Transverse colon (tissue), 4 donors: ENCODE measurements at regions of chr4 and their contacts with region 1.

Region 1: DNA sequence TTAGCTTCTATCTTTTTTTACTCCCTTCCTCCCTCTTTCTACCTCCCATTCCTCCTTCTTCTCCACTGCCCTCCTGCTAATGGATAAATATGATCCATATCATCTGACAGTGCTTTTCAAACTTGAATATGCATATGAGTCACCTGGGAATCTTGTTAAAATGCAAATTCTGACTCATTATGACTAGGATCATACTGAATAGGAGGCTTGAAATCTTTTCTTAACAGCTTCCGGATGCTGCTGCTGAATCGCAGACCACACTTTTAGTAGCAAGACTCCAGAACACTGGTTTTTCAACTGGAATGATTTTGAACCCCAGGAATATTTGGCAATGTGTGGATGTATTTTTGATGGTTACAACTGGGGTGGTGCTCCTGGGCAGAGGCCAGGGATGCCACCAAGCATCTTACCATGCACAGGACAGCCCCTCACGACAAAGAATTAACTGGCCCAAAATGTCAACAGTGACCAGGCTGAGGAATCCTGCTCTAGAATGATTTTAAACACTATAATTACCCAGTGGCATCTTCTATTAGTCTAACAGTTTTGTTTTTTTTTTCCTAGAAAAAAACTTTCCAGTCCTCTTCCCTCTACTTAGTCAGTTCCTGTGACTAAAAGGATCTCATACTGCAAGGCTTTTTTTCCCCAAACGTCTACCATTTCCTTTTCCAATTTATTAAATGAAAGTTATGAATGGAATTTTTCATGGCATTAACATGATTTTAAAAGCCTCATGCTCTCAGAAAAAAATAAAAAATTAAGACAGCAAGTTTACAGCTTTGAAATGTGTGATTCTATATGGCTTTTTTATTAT is 10.6 kb upstream of the PYURF start:
- DNase-seq: no peak
- H3K4me3 ChIP-seq: no peak overlapping the region
- H3K27ac ChIP-seq: no peak overlapping the region
- H3K4me1 ChIP-seq: no peaks in the 10 kb centered on the region
- H3K27me3 ChIP-seq: no peaks in the 10 kb centered on the region
- CTCF ChIP-seq: no peak
- EP300 ChIP-seq: no peak
- POLR2A ChIP-seq: no peak

Region 2: DNA sequence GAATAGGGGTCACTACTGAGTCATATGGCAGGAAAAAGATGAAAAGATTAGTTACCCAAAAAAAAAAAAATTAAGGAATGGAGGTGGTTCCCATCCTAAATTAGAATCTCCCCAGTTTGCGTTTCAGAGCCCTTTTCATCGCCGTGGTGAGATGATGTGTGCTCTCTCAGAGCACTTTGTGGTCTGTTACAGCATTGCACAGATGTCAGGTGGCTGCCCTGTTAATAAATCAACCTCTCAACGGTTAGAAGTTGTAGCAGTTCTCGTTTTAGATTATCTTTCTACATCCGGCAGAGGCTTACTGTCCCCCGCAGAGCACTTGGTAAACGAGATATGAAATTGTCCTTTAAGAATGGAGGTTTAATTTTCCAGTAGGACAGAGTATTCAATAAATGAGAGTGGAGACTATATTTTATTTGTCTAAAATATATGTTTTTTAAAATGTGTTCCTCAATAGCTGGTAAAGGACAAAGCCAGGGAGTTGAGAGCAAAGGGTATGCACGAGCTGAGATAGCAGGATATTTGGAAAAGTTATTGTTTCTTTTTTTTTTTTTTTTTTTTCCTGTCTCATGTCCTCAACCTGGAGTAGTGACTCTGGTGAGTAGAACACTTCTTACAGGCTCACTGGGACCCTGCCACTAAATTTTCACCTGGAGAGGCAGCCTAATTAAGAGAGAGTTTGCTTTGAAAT is 1572.4 kb before region 1 on chr4:
- in situ Hi-C with region 1: no loop called
- intact Hi-C with region 1: no loop called
- DNase-seq: peak; percentile 41
- H3K4me3 ChIP-seq: no peak overlapping the region
- H3K27ac ChIP-seq: peak overlapping the region; percentile 33 to 69 (median 51)
- H3K4me1 ChIP-seq: peaks cover 20 to 52% (median 41%) of the 10 kb centered on the region in 4 donors
- H3K27me3 ChIP-seq: no peaks in the 10 kb centered on the region
- CTCF ChIP-seq: no peak
- EP300 ChIP-seq: no peak
- POLR2A ChIP-seq: no peak

Region 3: GRCh38 chr4:87657525-87657924 is 876.6 kb before region 1 on chr4:
- in situ Hi-C with region 1: no loop called
- intact Hi-C with region 1: no loop called
- DNase-seq: no peak
- H3K4me3 ChIP-seq: no peak overlapping the region
- H3K27ac ChIP-seq: no peak overlapping the region
- H3K4me1 ChIP-seq: peaks cover 0 to 14% (median 2%) of the 10 kb centered on the region in 4 donors
- H3K27me3 ChIP-seq: no peaks in the 10 kb centered on the region
- CTCF ChIP-seq: no peak
- EP300 ChIP-seq: no peak
- POLR2A ChIP-seq: no peak

Region 4: DNA sequence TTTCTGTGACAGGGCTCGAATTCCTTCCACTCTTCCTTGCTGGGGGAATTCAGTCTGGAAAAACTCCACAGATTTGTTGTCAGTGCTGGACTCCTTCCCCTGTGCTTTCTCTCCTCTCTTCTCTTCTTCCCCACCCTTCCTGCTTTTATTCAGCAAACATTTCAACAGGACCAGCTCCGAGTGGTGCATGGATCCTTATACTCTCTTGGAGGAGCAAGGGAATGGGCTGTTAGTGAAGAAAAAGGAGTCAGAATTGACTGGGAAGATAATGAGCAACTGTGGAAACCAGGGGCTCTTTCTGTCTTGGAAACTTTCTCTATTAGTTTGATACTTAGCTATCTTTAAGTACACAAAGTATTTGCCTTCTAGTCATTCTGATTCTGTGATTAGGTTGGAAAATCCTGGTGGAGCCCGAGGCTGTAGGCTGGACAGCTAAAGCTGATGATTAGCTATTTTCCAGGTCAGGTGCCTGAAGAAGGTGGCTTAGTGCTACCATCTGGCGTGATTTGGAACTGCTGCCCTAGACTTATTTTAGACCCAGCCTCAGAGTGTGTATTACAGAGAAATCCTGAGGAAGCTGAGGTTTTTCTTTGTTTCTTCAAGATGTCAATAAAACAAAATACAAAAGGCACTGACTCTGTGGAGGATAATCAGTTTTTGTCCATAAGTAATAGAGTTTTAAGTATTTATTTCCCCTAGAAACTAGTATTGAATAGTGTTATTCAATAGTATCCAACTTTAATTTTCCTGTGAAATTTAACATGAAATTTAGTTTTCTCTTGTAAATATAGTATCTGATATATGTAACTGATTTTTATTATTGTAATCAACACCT is 125.1 kb after region 1 on chr4:
- in situ Hi-C with region 1: loop called (anchors 5 to 25 kb)
- intact Hi-C with region 1: loop called (anchors 5 kb)
- DNase-seq: peak; percentile 45
- H3K4me3 ChIP-seq: no peak overlapping the region
- H3K27ac ChIP-seq: peak overlapping the region; percentile 5 to 73 (median 50)
- H3K4me1 ChIP-seq: peaks cover 0 to 21% (median 11%) of the 10 kb centered on the region in 4 donors
- H3K27me3 ChIP-seq: no peaks in the 10 kb centered on the region
- CTCF ChIP-seq: peak; percentile 71 to 76 (median 75)
- EP300 ChIP-seq: no peak
- POLR2A ChIP-seq: no peak